Tibial artery (tissue), 4 donors: ENCODE measurements at regions of chr7 and their contacts with region 1.

Region 1: GRCh38 chr7:142345811-142346210 is 88.0 kb upstream of the PRSS58 start:
- DNase-seq: no peak
- H3K4me3 ChIP-seq: no peak overlapping the region
- H3K27ac ChIP-seq: no peak overlapping the region
- H3K4me1 ChIP-seq: no peaks in the 10 kb centered on the region
- H3K27me3 ChIP-seq: no peaks in the 10 kb centered on the region
- CTCF ChIP-seq: no peak

Region 2: GRCh38 chr7:143429770-143430698 is 1084.2 kb after region 1 on chr7:
- intact Hi-C with region 1: loop called (anchors 10 kb)
- DNase-seq: no peak
- H3K4me3 ChIP-seq: no peak overlapping the region
- H3K27ac ChIP-seq: no peak overlapping the region
- H3K4me1 ChIP-seq: no peaks in the 10 kb centered on the region
- H3K27me3 ChIP-seq: no peaks in the 10 kb centered on the region
- CTCF ChIP-seq: no peak